A549 (cell line): ENCODE measurements at regions of chr9 and their contacts with region 1.

Region 1: GRCh38 chr9:33778700-33779351 is 16.5 kb upstream of the PRSS3 start:
- DNase-seq: peak; percentile 67 to 76
- ATAC-seq: peak; percentile 91 to 93
- H3K4me3 ChIP-seq: no peak overlapping the region
- H3K27ac ChIP-seq: peak overlapping the region; percentile 16 to 76; a peak in 3 of 6 replicates
- H3K4me1 ChIP-seq: peaks cover 40% of the 10 kb centered on the region
- CTCF ChIP-seq: peak; percentile 87
- EP300 ChIP-seq: no peak
- POLR2A ChIP-seq: no peak
- RAD21 ChIP-seq: peak; percentile 81 to 83

Region 2: GRCh38 chr9:33737811-33738606 is 40.8 kb before region 1 on chr9:
- CTCF ChIA-PET with region 1: interaction called, 80 read pairs
- POLR2A ChIA-PET with region 1: interaction called, 6 read pairs
- DNase-seq: peak; percentile 47 to 81
- ATAC-seq: peak; percentile 95 to 99
- H3K4me3 ChIP-seq: no peak overlapping the region
- H3K27ac ChIP-seq: peak overlapping the region in 1 of 2 experiments; percentile 38; a peak in 2 of 6 replicates
- H3K4me1 ChIP-seq: 0 out of 3 replicates have a peak, but pooled peaks cover 5% of the 10 kb centered on the region
- CTCF ChIP-seq: peak; percentile 88
- EP300 ChIP-seq: no peak
- POLR2A ChIP-seq: no peak
- RAD21 ChIP-seq: peak; percentile 85 to 89

Region 3: DNA sequence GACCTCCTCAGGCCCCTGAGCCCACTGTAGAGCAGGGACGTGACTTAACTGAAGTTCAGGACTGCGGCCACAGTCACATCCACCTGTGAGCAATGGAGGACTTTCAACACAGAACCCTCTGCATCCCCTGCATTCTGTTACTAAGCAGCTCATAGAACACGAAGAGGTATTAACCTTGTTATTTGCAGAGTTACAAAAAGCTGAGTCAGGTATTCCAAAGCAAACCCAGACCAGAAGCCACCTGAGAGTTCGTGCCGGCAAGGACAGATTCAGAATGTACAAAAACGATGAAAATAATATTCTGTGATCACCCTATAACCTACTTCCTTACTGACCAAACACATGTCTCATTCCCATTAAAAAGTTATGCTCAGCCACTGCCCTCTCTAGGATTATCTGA is 16.5 kb before region 1 on chr9:
- CTCF ChIA-PET with region 1: interaction called, 10 read pairs
- POLR2A ChIA-PET with region 1: no interaction called
- DNase-seq: no peak
- ATAC-seq: no peak
- H3K4me3 ChIP-seq: no peak overlapping the region
- H3K27ac ChIP-seq: no peak overlapping the region
- H3K4me1 ChIP-seq: peaks cover 21% of the 10 kb centered on the region; the same call in 2 of the 3 replicates
- CTCF ChIP-seq: no peak
- EP300 ChIP-seq: no peak
- POLR2A ChIP-seq: no peak
- RAD21 ChIP-seq: no peak

Region 4: DNA sequence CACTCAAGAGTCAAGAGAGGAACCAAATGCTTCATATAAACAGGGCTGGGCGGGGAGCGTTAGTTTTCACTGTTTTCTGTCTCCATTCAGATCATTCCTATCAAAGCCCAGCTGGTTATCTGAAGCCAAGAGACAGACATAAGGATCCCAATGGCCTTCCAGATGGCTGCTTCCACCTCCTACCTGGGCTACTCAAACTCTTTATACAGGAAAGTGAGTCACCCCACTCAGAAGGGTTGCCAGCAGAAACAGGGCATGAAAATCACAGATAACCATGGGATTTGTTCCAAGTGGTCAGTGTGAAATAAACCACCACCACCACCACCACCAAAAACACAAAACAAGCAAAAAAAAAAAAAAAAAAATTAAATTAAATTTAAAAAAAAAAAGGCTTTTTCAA is 22.1 kb after region 1 on chr9:
- CTCF ChIA-PET with region 1: interaction called, 29 read pairs
- POLR2A ChIA-PET with region 1: no interaction called
- DNase-seq: no peak
- ATAC-seq: no peak
- H3K4me3 ChIP-seq: no peak overlapping the region
- H3K27ac ChIP-seq: no peak overlapping the region
- H3K4me1 ChIP-seq: no peaks in the 10 kb centered on the region
- CTCF ChIP-seq: no peak
- EP300 ChIP-seq: no peak
- POLR2A ChIP-seq: no peak
- RAD21 ChIP-seq: no peak